Ascending aorta (tissue), 2 donors: ENCODE measurements at regions of chr7 and their contacts with region 1.

Region 1: GRCh38 chr7:149838224-149838947 is at the start of gene ZNF862:
- DNase-seq: peak; percentile 92 to 98
- H3K4me3 ChIP-seq: peak within 1 kb of the TSS; percentile 84 to 94
- H3K27ac ChIP-seq: peak within 1 kb of the TSS; percentile 86 to 93
- H3K4me1 ChIP-seq: peaks cover 0 to 8% of the 10 kb centered on the region in 2 donors
- H3K27me3 ChIP-seq: no peaks in the 10 kb centered on the region
- CTCF ChIP-seq: no peak
- total RNA-seq, gene ZNF862: 1.7 TPM

Region 2: DNA sequence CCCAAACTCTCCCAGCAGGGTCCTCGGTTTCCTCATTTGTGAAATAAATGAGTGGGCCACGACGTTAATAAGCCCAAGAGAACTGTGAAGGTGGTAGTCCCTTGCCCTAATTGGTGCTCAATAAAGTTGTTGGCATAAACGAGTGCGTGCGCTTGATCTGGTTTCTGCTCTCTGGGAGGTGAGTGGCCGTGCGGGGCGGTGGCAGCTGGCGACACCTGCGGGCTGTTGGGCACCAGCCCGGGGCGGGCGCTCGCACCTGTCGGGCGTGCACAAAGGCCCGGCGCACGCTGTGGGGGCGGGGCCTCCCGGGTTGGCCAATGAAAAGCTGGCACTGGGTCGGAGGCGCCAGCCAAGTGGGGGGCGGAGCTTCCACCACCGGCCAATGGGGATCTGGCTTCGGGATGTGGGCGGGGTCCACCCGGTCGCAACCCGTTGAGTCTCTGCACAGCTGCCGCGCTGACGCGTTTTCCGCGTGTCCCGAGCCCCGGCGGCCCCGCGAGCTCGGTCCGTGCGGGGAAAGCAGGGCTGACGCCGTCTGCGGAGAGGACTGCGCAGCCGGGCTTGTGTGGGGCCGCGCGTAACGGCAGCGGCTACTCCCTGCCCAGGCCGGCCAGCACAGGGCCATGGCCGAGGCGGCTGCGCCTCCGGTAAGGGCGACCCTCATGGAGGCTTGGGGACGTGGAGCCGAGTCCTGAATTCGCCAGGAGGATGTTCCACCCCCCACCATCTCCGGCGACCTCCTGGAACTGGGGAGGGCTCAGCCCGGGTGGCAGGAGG is 553.3 kb before region 1 on chr7:
- intact Hi-C with region 1: loop called (anchors 10 kb)
- DNase-seq: peak; percentile 79 to 96
- H3K4me3 ChIP-seq: peak overlapping the region; percentile 66 to 88
- H3K27ac ChIP-seq: peak overlapping the region; percentile 20 to 48
- H3K4me1 ChIP-seq: peaks cover 3 to 14% of the 10 kb centered on the region in 2 donors
- H3K27me3 ChIP-seq: no peaks in the 10 kb centered on the region
- CTCF ChIP-seq: no peak

Region 3: GRCh38 chr7:149624419-149625339 is 213.7 kb before region 1 on chr7:
- intact Hi-C with region 1: loop called (anchors 1 kb)
- DNase-seq: peak; percentile 77 to 97
- H3K4me3 ChIP-seq: peak overlapping the region; percentile 91 to 98
- H3K27ac ChIP-seq: peak overlapping the region; percentile 84 to 90
- H3K4me1 ChIP-seq: peaks cover 0 to 7% of the 10 kb centered on the region in 2 donors
- H3K27me3 ChIP-seq: no peaks in the 10 kb centered on the region
- CTCF ChIP-seq: peak; percentile 92 to 98 (median 93)

Region 4: GRCh38 chr7:149729983-149730801 is 108.2 kb before region 1 on chr7:
- intact Hi-C with region 1: no loop called
- DNase-seq: no peak
- H3K4me3 ChIP-seq: no peak overlapping the region
- H3K27ac ChIP-seq: no peak overlapping the region
- H3K4me1 ChIP-seq: no peaks in the 10 kb centered on the region
- H3K27me3 ChIP-seq: no peaks in the 10 kb centered on the region
- CTCF ChIP-seq: no peak

Region 5: GRCh38 chr7:149873074-149873969 is 34.9 kb after region 1 on chr7 and contains the start of gene ATP6V0E2:
- intact Hi-C with region 1: loop called (anchors 1 kb)
- DNase-seq: peak; percentile 81 to 97
- H3K4me3 ChIP-seq: peak within 1 kb of the TSS; percentile 86 to 89
- H3K27ac ChIP-seq: peak within 1 kb of the TSS; percentile 84 to 86
- H3K4me1 ChIP-seq: peaks cover 11% of the 10 kb centered on the region in 2 donors
- H3K27me3 ChIP-seq: no peaks in the 10 kb centered on the region
- CTCF ChIP-seq: no peak
- total RNA-seq, gene ATP6V0E2: 29.5 TPM

Region 6: GRCh38 chr7:150404805-150405583 is 566.6 kb after region 1 on chr7:
- intact Hi-C with region 1: loop called (anchors 5 kb)
- DNase-seq: peak; percentile 61 to 92
- H3K4me3 ChIP-seq: peak overlapping the region; percentile 78 to 89
- H3K27ac ChIP-seq: peak overlapping the region; percentile 92 to 97
- H3K4me1 ChIP-seq: peaks cover 2 to 15% of the 10 kb centered on the region in 2 donors
- H3K27me3 ChIP-seq: no peaks in the 10 kb centered on the region
- CTCF ChIP-seq: peak in 2 of 3 experiments; percentile 6 to 25